OCI-LY7 (cell line): ENCODE measurements at regions of chr10 and their contacts with region 1.

Region 1: DNA sequence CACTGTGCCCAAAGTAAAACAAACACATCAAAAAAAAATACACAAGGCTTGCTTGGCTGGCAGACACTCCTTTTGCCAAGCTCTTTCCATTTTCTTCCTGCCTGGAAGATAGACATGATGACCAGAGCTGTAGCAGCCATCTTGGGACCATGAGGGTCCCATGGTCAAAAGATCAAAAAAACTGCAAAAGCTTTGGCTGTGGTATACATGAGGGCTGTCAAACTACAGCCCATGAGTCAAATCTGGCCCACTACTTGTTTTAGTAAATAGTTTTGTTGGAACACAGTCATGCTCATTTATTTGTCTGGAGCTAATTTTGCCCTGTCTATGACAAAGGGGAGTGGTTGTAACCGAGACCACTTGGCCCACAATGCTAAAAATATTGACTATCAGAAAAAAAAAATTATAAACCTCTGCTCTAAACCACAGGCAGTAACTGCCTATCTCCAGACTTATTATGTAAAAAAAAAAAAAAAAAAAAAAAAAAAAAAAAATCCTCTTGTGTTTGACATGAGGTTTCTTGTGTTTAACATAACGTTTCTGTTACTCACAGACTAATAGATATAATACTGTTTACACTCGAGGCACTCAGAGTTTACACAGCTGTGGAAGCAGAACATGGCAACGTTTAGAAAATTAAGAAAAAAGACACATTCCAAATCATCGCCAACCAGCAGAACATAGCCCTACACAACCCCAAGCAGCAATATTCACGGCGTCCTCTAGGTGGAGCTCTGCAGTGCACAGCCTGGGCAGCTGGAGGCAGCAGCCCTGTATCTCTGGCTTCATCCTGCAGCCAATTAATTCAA is 36.9 kb downstream of the ASB13 start:
- DNase-seq: peak; percentile 89
- H3K4me3 ChIP-seq: no peak overlapping the region
- H3K27ac ChIP-seq: no peak overlapping the region
- H3K4me1 ChIP-seq: peaks cover 23% of the 10 kb centered on the region
- CTCF ChIP-seq: peak; percentile 99

Region 2: DNA sequence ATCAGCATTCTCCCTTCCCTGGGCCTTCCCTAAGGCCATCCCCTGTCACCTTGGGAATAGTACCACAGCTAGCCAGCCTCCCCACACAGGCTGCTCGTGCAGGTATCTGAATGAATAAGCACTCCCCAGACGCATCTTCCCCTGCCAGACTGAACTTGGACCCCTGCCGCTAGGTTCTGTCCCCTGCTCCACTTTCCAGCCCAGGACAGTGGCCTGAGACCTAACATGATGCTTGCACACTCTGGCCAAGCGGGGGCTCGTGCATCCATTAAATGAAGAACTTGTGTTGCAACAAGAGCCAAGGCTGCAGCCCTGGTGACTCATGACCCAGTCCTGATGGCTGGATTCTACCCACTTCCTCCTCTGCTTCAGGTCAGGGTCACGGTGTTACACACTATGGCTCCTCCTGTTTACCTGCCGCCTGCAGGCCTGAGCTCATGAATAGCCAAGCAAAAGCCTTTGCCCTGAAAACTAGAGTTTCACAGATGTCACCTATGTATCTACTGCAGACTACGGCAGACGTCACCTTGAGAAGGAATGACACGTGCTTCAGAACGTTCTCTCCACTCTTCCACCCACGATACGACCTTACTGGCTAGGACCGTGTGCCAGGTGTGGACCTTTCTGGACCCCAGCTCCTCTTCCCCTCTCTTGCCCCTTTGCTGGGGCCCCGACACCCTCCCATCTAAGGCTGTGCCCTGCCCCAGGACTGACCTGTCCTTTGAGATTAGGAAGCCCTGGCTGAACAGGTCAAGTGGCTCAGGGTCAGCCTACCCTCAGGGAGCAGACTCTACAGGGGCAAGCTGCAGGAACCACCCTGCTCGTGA is 30.4 kb after region 1 on chr10:
- CTCF ChIA-PET with region 1: no interaction called
- POLR2A ChIA-PET with region 1: interaction called, 6 read pairs
- intact Hi-C with region 1: loop called (anchors 1 kb)
- DNase-seq: peak; percentile 83
- H3K4me3 ChIP-seq: peak overlapping the region; percentile 30
- H3K27ac ChIP-seq: peak overlapping the region; percentile 100
- H3K4me1 ChIP-seq: peaks cover 98% of the 10 kb centered on the region
- CTCF ChIP-seq: no peak

Region 3: DNA sequence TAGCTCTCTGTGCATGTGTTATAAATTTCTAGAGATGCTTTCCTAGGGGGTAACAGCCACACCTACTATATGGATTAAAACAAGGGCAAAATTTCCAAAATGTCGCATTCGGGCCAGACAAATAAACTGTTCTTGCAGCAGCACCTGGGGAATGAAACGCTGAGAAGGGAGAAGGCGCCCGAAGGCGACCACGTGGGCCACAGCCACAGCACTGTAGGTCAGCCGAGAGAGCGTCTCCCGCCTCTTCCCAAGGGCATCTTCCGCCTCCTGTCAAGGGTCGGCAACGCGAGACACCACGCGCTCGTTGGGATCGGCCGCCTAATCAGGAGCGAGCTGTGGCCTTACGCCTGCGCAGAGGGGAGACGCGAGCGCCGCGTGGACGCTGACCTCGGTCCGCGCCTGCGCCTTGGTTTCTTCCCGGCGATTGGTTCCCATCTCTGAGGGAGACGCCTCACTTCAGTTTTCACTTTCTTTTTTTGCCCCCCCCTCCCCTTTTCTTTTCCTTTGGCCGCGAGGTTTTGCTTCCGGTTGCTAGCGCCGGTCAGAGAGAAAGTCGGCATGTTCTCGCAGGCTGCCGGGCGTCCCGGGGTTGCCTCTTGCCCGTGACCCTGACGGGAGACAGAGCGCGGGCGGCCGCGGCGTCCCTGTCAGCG is 54.9 kb after region 1 on chr10 and contains the start of gene TASOR2:
- CTCF ChIA-PET with region 1: no interaction called
- POLR2A ChIA-PET with region 1: interaction called, 3 read pairs
- intact Hi-C with region 1: loop called (anchors 1 kb)
- DNase-seq: peak; percentile 97
- H3K4me3 ChIP-seq: peak within 1 kb of the TSS; percentile 81
- H3K27ac ChIP-seq: peak within 1 kb of the TSS; percentile 77
- H3K4me1 ChIP-seq: peaks cover 47% of the 10 kb centered on the region
- CTCF ChIP-seq: no peak
- total RNA-seq, gene TASOR2: 103 and 113 TPM in 2 replicates

Region 4: GRCh38 chr10:5710859-5711258 is 81.4 kb after region 1 on chr10:
- CTCF ChIA-PET with region 1: no interaction called
- POLR2A ChIA-PET with region 1: no interaction called
- intact Hi-C with region 1: loop called (anchors 2 kb)
- DNase-seq: no peak
- H3K4me3 ChIP-seq: no peak overlapping the region
- H3K27ac ChIP-seq: no peak overlapping the region
- H3K4me1 ChIP-seq: peaks cover 80% of the 10 kb centered on the region
- CTCF ChIP-seq: no peak

Region 5: DNA sequence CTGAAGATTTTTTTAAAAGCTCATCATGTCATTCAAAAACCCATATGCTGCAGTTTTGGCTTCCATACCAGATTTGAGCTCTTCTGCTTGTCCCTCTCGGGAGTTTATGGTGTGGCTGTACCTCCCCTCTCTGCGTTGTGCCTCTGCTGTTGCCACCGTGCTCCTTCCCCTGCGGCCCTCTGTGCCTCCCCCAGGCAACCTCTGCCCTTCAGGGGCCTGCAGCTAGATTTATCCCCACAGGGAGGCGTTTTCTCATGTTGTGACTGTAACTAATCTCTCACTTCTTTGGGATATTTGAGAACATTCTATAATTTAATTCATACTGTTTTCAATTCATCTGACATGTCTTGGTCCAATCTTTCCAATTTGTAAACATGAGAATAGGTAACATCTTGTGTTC is 107.8 kb after region 1 on chr10:
- CTCF ChIA-PET with region 1: interaction called, 3 read pairs
- POLR2A ChIA-PET with region 1: interaction called, 4 read pairs
- intact Hi-C with region 1: loop called (anchors 5 kb)
- DNase-seq: peak; percentile 43
- H3K4me3 ChIP-seq: no peak overlapping the region
- H3K27ac ChIP-seq: no peak overlapping the region
- H3K4me1 ChIP-seq: peaks cover 35% of the 10 kb centered on the region
- CTCF ChIP-seq: peak; percentile 70

Region 6: GRCh38 chr10:5764422-5765297 is 135.2 kb after region 1 on chr10:
- CTCF ChIA-PET with region 1: no interaction called
- POLR2A ChIA-PET with region 1: no interaction called
- intact Hi-C with region 1: loop called (anchors 5 kb)
- DNase-seq: no peak
- H3K4me3 ChIP-seq: no peak overlapping the region
- H3K27ac ChIP-seq: peak overlapping the region; percentile 6
- H3K4me1 ChIP-seq: no peaks in the 10 kb centered on the region
- CTCF ChIP-seq: peak; percentile 57